ENCODE measurements at regions of chr16 and their contacts with region 1.

Region 1: DNA sequence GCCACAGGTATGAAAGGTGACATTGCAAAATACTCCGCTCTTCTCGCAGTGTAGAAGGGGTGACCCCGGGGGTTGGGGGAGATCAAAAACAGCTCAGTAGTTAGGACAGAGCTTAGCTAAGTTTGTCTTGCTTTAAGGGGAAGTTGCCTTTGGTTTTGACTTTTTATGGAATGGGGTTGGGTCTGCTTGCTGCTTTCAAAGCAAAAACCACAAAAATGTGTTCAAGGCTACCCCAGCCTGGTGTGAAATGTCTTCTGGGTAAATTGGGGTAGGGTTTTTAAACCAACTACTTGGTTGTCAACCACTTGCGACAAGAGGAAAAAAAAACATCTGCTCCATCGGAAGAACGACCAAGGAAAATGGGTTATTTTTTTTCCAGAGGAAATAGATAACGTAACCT is 6.2 kb downstream of the FUS start:
- DNase-seq: no peak
- H3K4me3 ChIP-seq: no peak overlapping the region
- H3K27ac ChIP-seq: no peak overlapping the region
- H3K4me1 ChIP-seq: peaks cover 0 to 5% (median 1%) of the 10 kb centered on the region in 4 experiments; a peak in 5 of 7 replicates
- H3K27me3 ChIP-seq: no peaks in the 10 kb centered on the region
- CTCF ChIP-seq: no peak
- EP300 ChIP-seq: no peak
- POLR2A ChIP-seq: peak; percentile 9 to 27; a peak in 2 of 3 replicates
- RAD21 ChIP-seq: no peak

Region 2: DNA sequence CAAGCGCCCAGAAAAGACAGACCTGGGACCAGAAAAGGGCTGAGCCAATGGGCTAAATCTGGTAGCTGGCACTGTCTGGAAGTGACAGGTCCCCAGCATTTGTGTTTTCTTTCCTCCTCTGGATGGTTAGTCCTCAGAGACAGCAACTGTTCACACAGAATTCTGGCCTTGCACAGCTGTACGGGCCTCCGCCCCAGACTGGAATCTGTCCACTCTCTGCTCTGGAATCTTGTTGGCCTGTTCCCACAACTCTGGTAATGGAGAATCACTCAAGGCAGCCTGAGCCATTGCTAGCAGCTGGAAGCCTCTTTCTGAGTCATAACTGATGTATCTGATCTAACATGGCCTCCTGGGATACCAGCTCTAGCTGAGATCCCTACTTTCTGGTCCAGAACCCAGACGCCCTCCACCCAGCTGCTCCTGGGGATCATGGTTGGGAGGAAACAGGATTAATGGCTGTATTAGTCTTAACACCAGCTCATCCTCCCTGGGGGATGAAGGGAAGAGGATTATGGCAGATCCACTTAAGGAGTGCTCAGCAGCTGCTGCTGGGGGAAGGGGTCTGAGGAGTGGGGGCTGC is 121.2 kb before region 1 on chr16:
- CTCF ChIA-PET with region 1: no interaction called
- POLR2A ChIA-PET with region 1: no interaction called
- DNase-seq: no peak
- H3K4me3 ChIP-seq: no peak overlapping the region
- H3K27ac ChIP-seq: no peak overlapping the region
- H3K4me1 ChIP-seq: no peaks in the 10 kb centered on the region
- H3K27me3 ChIP-seq: no peaks in the 10 kb centered on the region
- CTCF ChIP-seq: no peak
- EP300 ChIP-seq: no peak
- POLR2A ChIP-seq: no peak
- RAD21 ChIP-seq: no peak

Region 3: GRCh38 chr16:31094424-31095120 is 91.6 kb before region 1 on chr16 and contains the start of gene VKORC1:
- CTCF ChIA-PET with region 1: no interaction called
- POLR2A ChIA-PET with region 1: no interaction called
- DNase-seq: peak; percentile 90 to 92
- H3K4me3 ChIP-seq: peak within 1 kb of the TSS; percentile 87 to 96 (median 92)
- H3K27ac ChIP-seq: peak within 1 kb of the TSS; percentile 16; the same call in 1 of the 2 replicates
- H3K4me1 ChIP-seq: peaks cover 0 to 9% (median 3%) of the 10 kb centered on the region in 4 experiments; a peak in 4 of 7 replicates
- H3K27me3 ChIP-seq: no peaks in the 10 kb centered on the region
- CTCF ChIP-seq: no peak
- EP300 ChIP-seq: no peak
- POLR2A ChIP-seq: peak in 1 of 2 experiments; percentile 36; a peak in 1 of 3 replicates
- RAD21 ChIP-seq: no peak
- total RNA-seq, gene VKORC1: 83.3 and 84.1 TPM in 2 replicates

Region 4: DNA sequence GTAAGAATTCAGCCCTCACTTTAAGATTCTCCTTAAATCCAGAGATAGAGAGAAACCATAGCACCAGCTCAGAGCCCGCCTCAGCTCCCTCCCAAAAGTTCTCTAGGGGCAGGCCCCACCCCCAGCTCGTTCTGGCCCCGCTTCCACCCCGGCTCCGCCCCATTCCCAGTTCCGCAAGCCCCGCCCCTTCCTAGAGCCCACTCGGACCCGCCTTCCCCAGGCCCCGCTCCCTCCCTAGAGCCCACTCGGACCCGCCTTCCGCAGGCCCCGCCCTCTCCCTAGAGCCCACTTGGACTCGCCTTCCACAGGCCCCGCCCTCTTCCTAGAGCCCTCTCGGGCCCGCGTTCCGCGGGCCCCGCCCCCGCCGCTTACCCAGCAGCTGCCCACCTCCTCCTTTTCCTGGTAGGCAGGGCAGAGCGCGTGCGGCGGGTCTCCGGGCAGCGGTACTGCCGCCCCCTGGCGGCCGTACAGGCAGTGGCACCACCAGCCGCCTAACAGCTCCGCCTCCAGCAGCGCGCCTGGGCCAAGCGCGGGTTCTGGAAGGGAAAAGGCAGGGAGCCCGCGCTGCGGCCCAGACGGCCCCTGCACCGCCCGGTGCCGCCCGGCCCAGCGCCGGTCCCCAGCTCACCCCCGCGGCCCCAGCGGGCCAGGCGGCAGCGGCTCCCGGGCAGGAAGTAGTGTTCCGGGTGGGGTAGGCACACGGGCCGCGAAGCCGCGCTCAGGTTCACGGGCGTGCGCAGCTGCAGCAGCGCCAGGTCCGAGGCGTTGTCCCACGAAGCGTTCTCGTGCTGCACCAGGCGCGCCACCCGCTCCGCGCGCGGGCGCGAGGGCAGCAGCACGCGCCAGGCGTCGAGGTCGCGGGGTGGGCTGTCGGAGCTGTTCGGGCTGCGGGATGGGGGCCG is 43.8 kb before region 1 on chr16:
- CTCF ChIA-PET with region 1: interaction called, 3 read pairs
- POLR2A ChIA-PET with region 1: interaction called, 85 read pairs
- DNase-seq: peak; percentile 98 to 99
- H3K4me3 ChIP-seq: peak overlapping the region; percentile 10 to 54 (median 24); a peak in 7 of 8 replicates
- H3K27ac ChIP-seq: peak overlapping the region; percentile 48; the same call in 1 of the 2 replicates
- H3K4me1 ChIP-seq: peaks cover 5 to 26% (median 22%) of the 10 kb centered on the region in 4 experiments
- H3K27me3 ChIP-seq: peaks cover 1 to 19% (median 12%) of the 10 kb centered on the region in 4 experiments
- CTCF ChIP-seq: peak; percentile 82 to 95 (median 87)
- EP300 ChIP-seq: 0 out of 3 replicates have a peak, but pooled peaks of 1 of the 2 experiments have one; percentile 45
- POLR2A ChIP-seq: no peak
- RAD21 ChIP-seq: peak; percentile 77 to 85